HEK293T (cell line): ENCODE measurements at regions of chr15 and their contacts with region 1.

Region 1: GRCh38 chr15:73994419-73994883 is at the start of gene PML:
- DNase-seq: peak; percentile 95

Region 2: DNA sequence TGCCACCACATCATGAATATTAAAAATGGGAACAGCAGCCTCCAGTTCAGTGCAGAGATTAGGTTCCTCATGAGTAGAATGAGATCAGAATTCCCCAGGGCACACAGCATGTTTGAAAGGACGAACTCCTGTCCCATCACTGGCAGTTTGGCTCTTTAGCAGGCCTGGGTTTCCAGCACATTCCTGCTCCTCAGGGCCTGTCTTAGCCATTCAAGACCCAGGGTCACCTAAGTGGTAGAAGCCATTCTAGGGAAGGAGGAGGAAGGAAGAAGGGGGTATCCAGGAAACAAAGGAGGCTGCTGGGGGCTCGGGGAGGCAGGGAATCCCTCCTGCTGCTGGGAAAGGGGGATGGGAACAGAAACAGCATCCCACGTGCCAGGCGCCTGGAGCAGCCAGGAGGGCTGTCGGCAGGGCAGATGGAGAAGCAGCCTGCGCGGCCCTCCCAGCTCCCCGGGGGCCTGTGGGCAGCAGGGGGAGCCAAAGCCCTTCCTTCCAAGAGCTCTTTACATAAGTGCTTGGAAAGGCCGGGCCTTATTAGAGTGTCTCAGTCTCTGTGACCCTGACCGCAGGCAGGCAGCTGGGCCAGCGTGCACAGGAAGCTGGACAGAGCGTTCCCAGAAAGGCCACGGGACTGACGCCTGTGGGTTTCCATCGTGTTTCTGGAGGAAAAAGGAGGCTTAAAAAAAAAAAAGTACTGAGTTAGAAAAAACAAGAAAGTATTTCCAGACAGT is 43.5 kb before region 1 on chr15:
- CTCF ChIA-PET with region 1: no interaction called
- POLR2A ChIA-PET with region 1: interaction called, 11 read pairs
- DNase-seq: peak; percentile 87

Region 3: GRCh38 chr15:73972984-73973682 is 21.3 kb before region 1 on chr15:
- CTCF ChIA-PET with region 1: interaction called, 10 read pairs
- POLR2A ChIA-PET with region 1: interaction called, 11 read pairs
- DNase-seq: peak; percentile 87

Region 4: DNA sequence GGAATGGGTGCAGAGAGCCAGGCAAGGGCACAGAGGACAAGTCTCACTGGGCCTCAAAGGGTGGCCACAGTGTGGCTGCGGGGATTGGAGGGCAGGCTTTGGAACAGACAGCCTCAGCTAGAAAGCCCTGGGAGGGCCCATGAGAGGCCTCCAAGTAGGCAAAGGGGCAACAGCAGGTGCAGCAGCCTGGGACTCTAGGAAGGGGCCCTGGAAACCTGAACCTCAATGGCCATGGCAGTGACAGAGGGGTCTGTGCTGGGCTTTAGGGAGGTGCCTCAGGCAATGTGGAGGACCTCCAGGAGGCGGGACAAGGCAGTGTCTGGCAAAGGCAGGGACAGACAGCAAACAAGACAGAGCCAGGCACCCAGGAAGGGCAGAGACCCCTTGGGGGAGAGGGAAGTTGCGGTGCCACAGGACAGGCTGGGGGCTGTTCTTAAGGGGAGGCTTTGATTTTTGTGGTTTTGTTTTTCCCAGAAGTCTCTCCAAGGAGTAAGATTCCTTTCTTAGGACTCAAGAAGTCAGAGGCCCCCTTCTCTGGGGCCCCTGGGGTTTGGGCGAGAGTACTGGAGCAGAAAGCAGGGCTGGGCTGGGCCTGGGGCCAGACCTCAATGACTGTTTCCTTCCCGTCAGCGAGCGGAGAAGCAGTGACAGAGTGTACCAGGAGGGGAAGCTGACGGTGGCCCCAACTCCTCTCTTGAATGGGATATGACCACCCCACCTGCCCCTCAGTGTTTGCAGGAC is 12.1 kb before region 1 on chr15:
- CTCF ChIA-PET with region 1: no interaction called
- POLR2A ChIA-PET with region 1: interaction called, 12 read pairs
- DNase-seq: no peak

Region 5: GRCh38 chr15:74007820-74008371 is 13.4 kb after region 1 on chr15:
- CTCF ChIA-PET with region 1: interaction called, 3 read pairs
- POLR2A ChIA-PET with region 1: interaction called, 11 read pairs
- DNase-seq: no peak

Region 6: GRCh38 chr15:74047781-74048180 is 53.3 kb after region 1 on chr15:
- CTCF ChIA-PET with region 1: interaction called, 11 read pairs
- POLR2A ChIA-PET with region 1: interaction called, 4 read pairs
- DNase-seq: no peak

Region 7: DNA sequence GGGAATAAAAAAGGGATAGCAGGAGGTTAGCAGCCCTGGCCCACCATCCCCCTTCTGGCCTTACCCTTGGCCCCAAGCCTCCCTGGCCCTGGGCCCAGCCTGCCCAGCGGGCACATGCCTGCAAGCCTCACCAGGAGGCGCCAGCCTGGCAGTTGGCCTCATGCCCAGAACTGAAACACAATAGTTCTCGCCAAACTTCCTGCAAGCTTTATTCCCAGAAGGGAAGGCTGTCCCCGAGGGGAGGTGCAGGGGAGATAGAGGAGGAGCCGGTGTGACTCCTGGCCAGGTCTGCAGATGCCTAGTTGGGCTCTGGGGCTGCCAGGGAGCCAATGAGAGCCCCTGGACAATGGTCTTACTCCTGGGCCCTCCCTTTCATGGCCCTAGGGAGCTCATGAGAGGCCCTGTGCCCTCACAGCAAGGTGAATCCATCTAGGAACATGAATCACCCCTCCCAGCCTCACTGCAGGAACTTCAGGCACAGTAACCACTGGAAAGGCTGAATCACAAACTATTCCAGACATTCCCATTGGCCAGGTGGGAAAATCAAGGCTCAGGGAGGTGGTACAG is 245.6 kb after region 1 on chr15:
- CTCF ChIA-PET with region 1: no interaction called
- POLR2A ChIA-PET with region 1: no interaction called
- DNase-seq: no peak